HepG2 (cell line): ENCODE measurements at regions of chr1 and their contacts with region 1.

Region 1: DNA sequence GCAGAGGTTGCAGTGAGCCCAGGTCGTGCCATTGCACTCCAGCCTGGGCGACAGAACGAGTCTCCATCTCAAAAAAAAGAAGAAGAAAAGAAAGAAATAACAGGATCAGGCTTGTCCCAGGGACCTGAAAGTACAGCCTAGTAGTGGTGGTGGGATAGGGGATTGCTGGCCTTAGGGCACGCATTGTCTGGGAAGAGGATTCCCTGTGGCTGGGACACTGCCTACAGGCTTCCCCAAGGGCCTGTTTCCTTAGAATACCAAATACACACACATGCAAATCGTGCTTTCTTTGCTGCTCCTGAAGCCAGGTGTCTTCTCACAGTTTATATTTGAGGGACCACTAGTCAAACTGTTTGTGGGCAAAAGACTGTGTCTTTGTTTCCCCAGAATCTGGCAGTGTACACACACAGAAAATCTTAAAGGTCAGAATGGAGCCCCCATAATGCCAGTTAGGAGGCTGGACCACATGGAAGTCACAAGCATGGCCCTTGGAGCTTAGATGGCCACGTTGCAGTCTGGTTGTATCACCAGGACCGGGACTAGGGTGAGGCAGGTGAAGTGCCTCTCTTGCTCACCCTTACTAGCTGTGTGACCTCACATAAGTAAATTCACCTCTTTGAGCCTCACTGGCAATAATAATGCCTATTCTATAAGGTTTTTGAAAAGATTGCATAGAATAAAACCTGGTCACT is 12.7 kb upstream of the ASAP3 start:
- DNase-seq: no peak
- ATAC-seq: peak; percentile 39
- H3K4me3 ChIP-seq: no peak overlapping the region
- H3K27ac ChIP-seq: no peak overlapping the region
- H3K4me1 ChIP-seq: peaks cover 35% of the 10 kb centered on the region
- H3K27me3 ChIP-seq: peaks cover 0 to 3% of the 10 kb centered on the region in 2 experiments; a peak in 1 of 5 replicates
- CTCF ChIP-seq: no peak
- EP300 ChIP-seq: no peak
- POLR2A ChIP-seq: no peak
- RAD21 ChIP-seq: no peak

Region 2: DNA sequence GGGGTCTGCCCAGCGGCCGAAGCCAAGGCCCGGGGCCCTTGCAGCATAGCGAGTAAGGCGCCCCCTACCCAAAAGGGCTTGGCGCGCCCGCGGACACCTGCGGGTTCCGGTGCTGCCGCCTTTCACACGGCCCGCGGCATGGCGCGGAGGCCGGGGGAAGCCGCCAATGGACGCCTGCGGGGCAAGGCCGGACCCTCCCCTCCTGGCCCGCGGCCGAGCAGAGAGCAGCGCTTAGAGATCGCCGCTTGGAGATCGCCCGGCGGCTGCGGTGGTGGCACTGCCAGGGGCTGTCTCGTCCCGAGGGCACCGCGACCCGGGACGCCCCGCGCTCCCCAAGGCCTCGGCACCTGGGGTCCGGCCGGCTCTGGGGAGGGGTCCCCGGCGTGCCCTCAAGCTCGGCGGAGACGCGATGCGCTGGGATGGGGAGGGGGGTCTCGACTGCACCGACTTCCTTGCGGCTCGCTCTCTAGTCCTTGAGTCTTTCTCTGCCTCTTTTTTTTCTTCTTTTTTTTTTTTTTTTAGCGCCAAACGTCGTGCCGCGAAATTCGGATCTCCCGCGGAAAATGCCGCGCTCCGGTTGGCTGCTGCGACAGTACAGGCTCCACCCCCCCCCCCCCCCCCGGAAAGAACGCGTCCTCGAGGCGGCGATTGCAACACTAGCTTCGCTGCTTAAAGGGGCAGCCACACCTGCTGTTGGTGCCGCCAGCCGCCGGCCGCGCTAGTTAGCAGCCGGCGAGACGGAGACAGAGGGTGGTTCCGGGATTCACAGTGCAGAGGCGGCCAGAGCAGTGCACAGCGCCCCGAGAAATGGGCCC is 34.3 kb after region 1 on chr1 and contains the start of gene E2F2:
- CTCF ChIA-PET with region 1: no interaction called
- POLR2A ChIA-PET with region 1: no interaction called
- in situ Hi-C with region 1: loop called (anchors 5 kb)
- intact Hi-C with region 1: no loop called
- DNase-seq: peak; percentile 80
- ATAC-seq: peak; percentile 84
- H3K4me3 ChIP-seq: peak within 1 kb of the TSS; percentile 75 to 83 (median 77)
- H3K27ac ChIP-seq: peak within 1 kb of the TSS; percentile 58
- H3K4me1 ChIP-seq: peaks cover 89% of the 10 kb centered on the region
- H3K27me3 ChIP-seq: no peaks in the 10 kb centered on the region
- CTCF ChIP-seq: peak; percentile 58
- EP300 ChIP-seq: no peak
- POLR2A ChIP-seq: no peak
- RAD21 ChIP-seq: no peak
- total RNA-seq, gene E2F2: 5.7 and 6.6 TPM in 2 replicates

Region 3: DNA sequence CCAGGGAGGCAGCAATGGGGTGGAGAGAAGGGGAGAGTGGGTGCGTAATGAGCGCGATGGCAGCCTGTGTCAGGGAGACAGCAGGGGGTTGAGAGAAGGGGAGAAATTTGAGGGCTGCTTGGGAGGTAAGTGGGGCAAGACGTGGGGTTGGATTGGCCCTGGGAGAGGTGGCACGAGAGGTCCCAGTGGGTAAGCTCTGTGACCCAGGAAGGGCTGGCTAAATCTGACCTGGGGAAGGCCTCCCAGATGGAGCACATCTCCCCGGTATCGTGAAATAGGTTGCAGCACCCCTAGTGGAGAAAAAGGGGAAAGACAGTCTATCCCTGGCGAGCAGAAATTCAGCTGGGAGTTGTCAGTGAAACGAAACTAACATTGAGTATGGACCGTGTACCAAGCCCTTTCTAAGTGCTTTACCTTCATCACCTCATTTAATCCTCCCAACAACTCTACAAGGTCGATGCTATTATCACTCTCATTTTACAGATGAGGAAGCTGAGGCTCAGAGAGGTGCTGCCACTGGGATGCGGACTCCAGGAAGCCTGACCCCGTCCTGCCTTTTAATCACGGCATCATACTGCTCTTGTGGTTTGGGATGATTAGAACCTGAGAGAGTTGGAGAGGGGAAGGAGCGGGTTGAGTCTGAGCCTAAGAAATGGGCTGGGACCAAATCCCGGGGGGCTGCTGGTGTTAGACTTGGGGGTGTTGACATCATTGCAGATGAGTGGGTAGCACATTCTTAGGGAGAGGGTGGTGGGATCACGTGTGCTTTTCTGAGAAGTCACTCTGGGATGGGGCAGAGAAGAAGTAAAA is 138.4 kb after region 1 on chr1:
- CTCF ChIA-PET with region 1: no interaction called
- POLR2A ChIA-PET with region 1: interaction called, 3 read pairs
- in situ Hi-C with region 1: no loop called
- intact Hi-C with region 1: loop called (anchors 5 kb)
- DNase-seq: peak; percentile 53
- ATAC-seq: peak; percentile 63
- H3K4me3 ChIP-seq: peak overlapping the region; percentile 47 to 69 (median 67)
- H3K27ac ChIP-seq: no peak overlapping the region
- H3K4me1 ChIP-seq: peaks cover 27% of the 10 kb centered on the region
- H3K27me3 ChIP-seq: peaks cover 4 to 22% of the 10 kb centered on the region in 2 experiments; a peak in 4 of 5 replicates
- CTCF ChIP-seq: peak; percentile 80
- EP300 ChIP-seq: no peak
- POLR2A ChIP-seq: no peak
- RAD21 ChIP-seq: no peak